A549 (cell line): ENCODE measurements at regions of chr2 and their contacts with region 1.

Region 1: DNA sequence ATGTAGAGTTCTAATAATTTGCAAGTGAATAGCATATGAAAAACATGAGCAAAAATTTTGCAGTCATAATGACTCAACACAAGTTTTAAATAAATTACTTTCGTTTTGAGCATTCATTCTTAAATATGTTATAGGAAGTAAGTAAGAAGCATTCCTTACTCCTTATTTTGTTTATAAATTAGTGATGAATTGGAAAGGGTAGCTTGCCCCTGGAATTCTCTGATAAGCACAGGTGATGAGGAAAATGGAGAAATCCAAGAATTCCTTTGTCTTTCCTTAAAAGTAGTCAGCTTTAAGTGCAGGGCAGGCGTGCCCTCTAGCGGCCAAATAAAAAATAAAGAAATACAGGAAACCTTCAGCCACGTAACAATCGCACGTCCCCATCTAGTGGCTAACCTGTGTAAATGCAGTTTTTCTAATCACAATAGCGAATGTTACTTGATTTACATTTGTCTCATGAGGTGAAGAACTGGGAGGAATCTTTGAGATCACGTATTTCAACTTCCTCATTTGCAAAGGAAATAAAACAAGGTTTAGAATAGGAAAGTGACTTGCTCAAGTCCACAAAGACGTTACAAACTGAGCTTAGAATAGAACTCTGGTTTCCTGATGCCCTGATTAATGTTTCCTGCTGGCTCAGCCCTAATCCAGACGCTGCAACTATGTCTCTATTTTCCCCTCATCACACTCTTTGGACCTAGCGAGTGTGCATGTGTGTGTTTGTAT is 47.2 kb upstream of the ZNG1B start:
- DNase-seq: peak; percentile 14 to 85
- ATAC-seq: peak; percentile 77 to 89
- H3K4me3 ChIP-seq: no peak overlapping the region
- H3K27ac ChIP-seq: peak overlapping the region; percentile 12 to 59; a peak in 4 of 6 replicates
- H3K4me1 ChIP-seq: peaks cover 6% of the 10 kb centered on the region; the same call in 2 of the 3 replicates
- CTCF ChIP-seq: peak; percentile 95
- EP300 ChIP-seq: no peak
- POLR2A ChIP-seq: no peak
- RAD21 ChIP-seq: peak; percentile 74 to 82

Region 2: GRCh38 chr2:112941753-112942658 is 448.3 kb before region 1 on chr2:
- CTCF ChIA-PET with region 1: no interaction called
- POLR2A ChIA-PET with region 1: no interaction called
- DNase-seq: peak; percentile 43 to 78
- ATAC-seq: peak; percentile 97 to 99
- H3K4me3 ChIP-seq: no peak overlapping the region
- H3K27ac ChIP-seq: no peak overlapping the region
- H3K4me1 ChIP-seq: no peaks in the 10 kb centered on the region
- CTCF ChIP-seq: peak; percentile 70
- EP300 ChIP-seq: no peak
- POLR2A ChIP-seq: no peak
- RAD21 ChIP-seq: peak; percentile 78 to 90

Region 3: GRCh38 chr2:113219889-113220641 is 170.2 kb before region 1 on chr2:
- CTCF ChIA-PET with region 1: interaction called, 11 read pairs
- POLR2A ChIA-PET with region 1: no interaction called
- DNase-seq: peak; percentile 64 to 92
- ATAC-seq: peak; percentile 54 to 73
- H3K4me3 ChIP-seq: peak overlapping the region; percentile 31
- H3K27ac ChIP-seq: peak overlapping the region; percentile 96
- H3K4me1 ChIP-seq: peaks cover 67% of the 10 kb centered on the region
- CTCF ChIP-seq: no peak
- EP300 ChIP-seq: no peak
- POLR2A ChIP-seq: peak; percentile 62
- RAD21 ChIP-seq: no peak

Region 4: GRCh38 chr2:113248997-113249770 is 141.1 kb before region 1 on chr2:
- CTCF ChIA-PET with region 1: interaction called, 14 read pairs
- POLR2A ChIA-PET with region 1: no interaction called
- DNase-seq: peak; percentile 67 to 83
- ATAC-seq: peak; percentile 67 to 92; a peak in 4 of 6 replicates
- H3K4me3 ChIP-seq: no peak overlapping the region
- H3K27ac ChIP-seq: peak overlapping the region; percentile 97 to 98
- H3K4me1 ChIP-seq: peaks cover 24% of the 10 kb centered on the region
- CTCF ChIP-seq: peak; percentile 82
- EP300 ChIP-seq: no peak
- POLR2A ChIP-seq: no peak
- RAD21 ChIP-seq: peak; percentile 95 to 97

Region 5: DNA sequence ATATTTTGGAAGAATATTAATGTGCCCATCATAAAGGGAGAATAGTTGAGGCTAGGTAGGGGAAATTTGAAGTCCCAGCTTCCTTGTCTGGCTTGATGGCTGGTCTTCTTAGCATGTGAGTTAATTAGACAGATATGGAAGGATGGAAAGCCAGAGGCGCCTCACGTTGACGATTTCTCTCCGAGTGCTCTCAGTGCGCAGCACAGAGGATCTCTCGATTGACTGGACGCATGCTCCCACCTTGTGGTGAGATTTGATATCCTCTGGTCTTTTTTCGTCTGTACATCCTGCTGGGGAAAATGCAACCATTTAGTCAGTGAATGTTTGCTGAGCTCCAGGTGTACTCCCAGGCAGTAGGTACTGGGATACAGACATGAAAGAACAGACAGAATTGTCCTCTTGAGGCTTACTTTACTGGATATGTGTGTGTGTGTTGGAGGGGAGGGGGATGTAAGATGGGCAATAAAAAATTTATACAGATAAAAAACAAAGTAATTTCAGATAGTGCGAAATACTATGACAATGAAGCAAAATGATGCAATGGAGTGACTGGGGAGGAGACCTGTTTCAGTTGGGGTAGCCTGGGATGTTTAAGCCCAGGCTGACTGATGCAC is 19.7 kb before region 1 on chr2:
- CTCF ChIA-PET with region 1: interaction called, 13 read pairs
- POLR2A ChIA-PET with region 1: no interaction called
- DNase-seq: peak; percentile 67 to 89
- ATAC-seq: peak; percentile 96 to 99
- H3K4me3 ChIP-seq: no peak overlapping the region
- H3K27ac ChIP-seq: peak overlapping the region; percentile 70 to 84
- H3K4me1 ChIP-seq: peaks cover 36% of the 10 kb centered on the region
- CTCF ChIP-seq: peak; percentile 91
- EP300 ChIP-seq: no peak
- POLR2A ChIP-seq: no peak
- RAD21 ChIP-seq: peak; percentile 98 to 99

Region 6: GRCh38 chr2:113407446-113408099 is 17.3 kb after region 1 on chr2:
- CTCF ChIA-PET with region 1: interaction called, 10 read pairs
- POLR2A ChIA-PET with region 1: no interaction called
- DNase-seq: peak; percentile 32 to 62
- ATAC-seq: peak; percentile 70 to 89; a peak in 5 of 6 replicates
- H3K4me3 ChIP-seq: no peak overlapping the region
- H3K27ac ChIP-seq: no peak overlapping the region
- H3K4me1 ChIP-seq: peaks cover 9% of the 10 kb centered on the region
- CTCF ChIP-seq: peak; percentile 58
- EP300 ChIP-seq: no peak
- POLR2A ChIP-seq: no peak
- RAD21 ChIP-seq: peak; percentile 45 to 50; a peak in 4 of 5 replicates